GM12878 (cell line): ENCODE measurements at regions of chr17 and their contacts with region 1.

Region 1: GRCh38 chr17:7862692-7863437 is 5.1 kb downstream of the CYB5D1 start:
- DNase-seq: no peak
- ATAC-seq: no peak
- H3K4me3 ChIP-seq: no peak overlapping the region
- H3K27ac ChIP-seq: no peak overlapping the region
- H3K4me1 ChIP-seq: peaks cover 4% of the 10 kb centered on the region
- H3K27me3 ChIP-seq: no peaks in the 10 kb centered on the region
- CTCF ChIP-seq: peak; percentile 64 to 73 (median 67)
- EP300 ChIP-seq: no peak
- POLR2A ChIP-seq: no peak
- RAD21 ChIP-seq: peak; percentile 93

Region 2: DNA sequence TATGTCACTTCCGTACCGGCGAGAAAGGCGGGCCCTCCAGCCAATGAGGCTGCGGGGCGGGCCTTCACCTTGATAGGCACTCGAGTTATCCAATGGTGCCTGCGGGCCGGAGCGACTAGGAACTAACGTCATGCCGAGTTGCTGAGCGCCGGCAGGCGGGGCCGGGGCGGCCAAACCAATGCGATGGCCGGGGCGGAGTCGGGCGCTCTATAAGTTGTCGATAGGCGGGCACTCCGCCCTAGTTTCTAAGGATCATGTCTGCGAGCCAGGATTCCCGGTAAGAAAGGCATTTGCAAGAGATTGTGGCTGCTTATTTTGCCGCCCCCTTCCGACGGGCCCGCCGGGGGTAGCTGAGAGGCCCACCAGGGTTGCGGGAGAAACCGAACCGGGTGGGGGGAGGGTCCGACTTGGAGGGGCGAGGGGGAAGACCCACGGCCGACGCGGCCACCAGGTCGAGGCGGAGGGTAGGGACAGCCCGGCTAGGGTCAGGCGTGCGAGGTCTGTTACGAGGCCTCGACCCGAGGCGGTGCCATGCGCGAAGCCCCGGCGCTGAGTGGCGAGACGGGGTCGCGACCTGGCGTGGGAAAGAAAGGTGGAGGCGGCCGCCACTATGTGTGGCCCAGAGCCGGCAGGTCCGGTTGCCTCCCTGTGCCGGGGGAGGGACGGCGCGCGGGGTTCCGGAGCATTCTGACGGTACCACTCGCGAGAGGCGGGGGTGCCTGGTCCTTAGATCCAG is 290.1 kb before region 1 on chr17:
- CTCF ChIA-PET with region 1: no interaction called
- POLR2A ChIA-PET with region 1: no interaction called
- RAD21 ChIA-PET with region 1: no interaction called
- SMC1A ChIA-PET with region 1: no interaction called
- in situ Hi-C with region 1: no loop called
- intact Hi-C with region 1: no loop called
- DNase-seq: peak; percentile 98
- ATAC-seq: peak; percentile 0
- H3K4me3 ChIP-seq: peak overlapping the region; percentile 93
- H3K27ac ChIP-seq: peak overlapping the region; percentile 97
- H3K4me1 ChIP-seq: peaks cover 21% of the 10 kb centered on the region
- H3K27me3 ChIP-seq: no peaks in the 10 kb centered on the region
- CTCF ChIP-seq: no peak
- EP300 ChIP-seq: no peak
- POLR2A ChIP-seq: peak; percentile 85
- RAD21 ChIP-seq: no peak

Region 3: DNA sequence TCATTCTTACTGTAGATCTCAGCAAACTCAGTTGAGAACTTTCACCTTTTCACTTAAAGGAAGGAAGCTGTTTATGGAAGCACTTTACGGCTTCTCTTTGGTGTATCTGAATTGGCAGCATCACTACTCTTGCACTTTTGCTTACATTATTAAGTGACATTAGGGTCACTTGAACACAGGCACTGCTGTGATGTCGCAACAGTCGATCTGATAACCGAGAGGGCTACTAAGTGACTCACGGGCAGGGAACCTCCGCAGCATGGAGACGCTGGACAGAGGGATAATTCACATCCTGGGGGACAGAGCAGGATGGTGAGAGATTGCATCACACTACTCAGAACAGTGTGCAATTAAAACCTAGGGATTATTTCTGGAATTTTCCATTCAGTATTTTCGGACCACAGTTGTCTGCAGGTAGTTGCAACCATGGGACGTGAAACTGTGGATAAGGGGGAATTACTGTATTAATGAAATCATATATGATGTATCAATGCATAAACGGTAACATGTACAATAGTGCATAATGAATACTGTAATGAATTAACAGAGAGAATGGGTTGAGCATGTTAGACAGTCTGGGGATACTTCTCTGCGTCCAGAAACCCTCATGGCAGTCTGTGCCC is 88.7 kb before region 1 on chr17:
- CTCF ChIA-PET with region 1: no interaction called
- POLR2A ChIA-PET with region 1: no interaction called
- RAD21 ChIA-PET with region 1: no interaction called
- SMC1A ChIA-PET with region 1: no interaction called
- in situ Hi-C with region 1: no loop called
- intact Hi-C with region 1: no loop called
- DNase-seq: no peak
- ATAC-seq: no peak
- H3K4me3 ChIP-seq: no peak overlapping the region
- H3K27ac ChIP-seq: no peak overlapping the region
- H3K4me1 ChIP-seq: no peaks in the 10 kb centered on the region
- H3K27me3 ChIP-seq: peaks cover 3 to 5% of the 10 kb centered on the region in 2 experiments; a peak in 3 of 4 replicates
- CTCF ChIP-seq: no peak
- EP300 ChIP-seq: no peak
- POLR2A ChIP-seq: no peak
- RAD21 ChIP-seq: no peak

Region 4: GRCh38 chr17:7885367-7886226 is 22.7 kb after region 1 on chr17:
- CTCF ChIA-PET with region 1: interaction called, 75 read pairs
- POLR2A ChIA-PET with region 1: interaction called, 11 read pairs
- RAD21 ChIA-PET with region 1: interaction called, 8 read pairs
- SMC1A ChIA-PET with region 1: interaction called, 5 read pairs
- in situ Hi-C with region 1: no loop called
- intact Hi-C with region 1: no loop called
- DNase-seq: no peak
- ATAC-seq: peak; percentile 51
- H3K4me3 ChIP-seq: peak overlapping the region; percentile 88
- H3K27ac ChIP-seq: peak overlapping the region; percentile 91
- H3K4me1 ChIP-seq: peaks cover 14% of the 10 kb centered on the region
- H3K27me3 ChIP-seq: no peaks in the 10 kb centered on the region
- CTCF ChIP-seq: no peak
- EP300 ChIP-seq: no peak
- POLR2A ChIP-seq: peak; percentile 67
- RAD21 ChIP-seq: no peak

Region 5: DNA sequence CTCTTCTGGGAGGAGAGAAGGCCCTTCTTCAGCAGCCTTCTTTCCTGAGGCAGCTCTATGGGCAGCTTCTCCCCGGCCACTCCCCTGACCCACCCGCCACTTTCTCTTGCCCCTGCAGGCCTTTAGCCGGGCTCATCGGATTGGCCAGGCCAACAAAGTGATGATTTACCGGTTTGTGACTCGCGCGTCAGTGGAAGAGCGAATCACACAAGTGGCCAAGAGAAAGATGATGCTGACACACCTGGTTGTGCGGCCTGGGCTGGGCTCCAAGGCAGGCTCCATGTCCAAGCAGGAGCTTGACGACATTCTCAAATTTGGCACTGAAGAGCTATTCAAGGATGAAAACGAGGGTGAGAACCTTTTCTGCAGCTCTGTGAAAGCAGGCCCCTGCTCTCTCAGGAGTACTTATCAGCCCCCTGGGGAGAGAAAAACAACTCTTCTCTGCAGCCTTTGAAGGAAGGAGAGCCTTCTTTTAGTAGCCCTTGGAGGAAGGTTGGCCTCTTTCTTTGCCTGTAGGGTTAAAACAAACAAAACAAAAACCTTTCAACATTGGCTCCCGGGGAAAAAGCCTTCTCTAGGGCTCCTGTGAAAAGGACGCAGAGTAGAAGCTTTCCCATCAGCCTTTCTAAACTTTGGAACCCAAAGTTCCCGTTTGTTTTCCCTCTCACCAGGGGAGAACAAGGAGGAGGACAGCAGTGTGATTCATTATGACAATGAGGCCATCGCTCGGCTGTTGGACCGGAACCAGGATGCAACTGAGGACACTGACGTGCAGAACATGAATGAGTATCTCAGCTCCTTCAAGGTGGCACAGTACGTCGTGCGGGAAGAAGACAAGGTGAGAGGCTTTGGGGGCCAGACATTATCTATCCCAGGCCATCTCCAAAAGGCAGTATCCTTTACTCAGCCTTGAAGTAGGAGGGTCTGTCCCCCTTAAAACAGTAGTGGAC is 40.6 kb after region 1 on chr17:
- CTCF ChIA-PET with region 1: interaction called, 19 read pairs
- POLR2A ChIA-PET with region 1: no interaction called
- RAD21 ChIA-PET with region 1: no interaction called
- SMC1A ChIA-PET with region 1: interaction called, 12 read pairs
- in situ Hi-C with region 1: no loop called
- intact Hi-C with region 1: loop called (anchors 5 kb)
- DNase-seq: no peak
- ATAC-seq: no peak
- H3K4me3 ChIP-seq: no peak overlapping the region
- H3K27ac ChIP-seq: no peak overlapping the region
- H3K4me1 ChIP-seq: no peaks in the 10 kb centered on the region
- H3K27me3 ChIP-seq: no peaks in the 10 kb centered on the region
- CTCF ChIP-seq: no peak
- EP300 ChIP-seq: no peak
- POLR2A ChIP-seq: no peak
- RAD21 ChIP-seq: no peak

Region 6: DNA sequence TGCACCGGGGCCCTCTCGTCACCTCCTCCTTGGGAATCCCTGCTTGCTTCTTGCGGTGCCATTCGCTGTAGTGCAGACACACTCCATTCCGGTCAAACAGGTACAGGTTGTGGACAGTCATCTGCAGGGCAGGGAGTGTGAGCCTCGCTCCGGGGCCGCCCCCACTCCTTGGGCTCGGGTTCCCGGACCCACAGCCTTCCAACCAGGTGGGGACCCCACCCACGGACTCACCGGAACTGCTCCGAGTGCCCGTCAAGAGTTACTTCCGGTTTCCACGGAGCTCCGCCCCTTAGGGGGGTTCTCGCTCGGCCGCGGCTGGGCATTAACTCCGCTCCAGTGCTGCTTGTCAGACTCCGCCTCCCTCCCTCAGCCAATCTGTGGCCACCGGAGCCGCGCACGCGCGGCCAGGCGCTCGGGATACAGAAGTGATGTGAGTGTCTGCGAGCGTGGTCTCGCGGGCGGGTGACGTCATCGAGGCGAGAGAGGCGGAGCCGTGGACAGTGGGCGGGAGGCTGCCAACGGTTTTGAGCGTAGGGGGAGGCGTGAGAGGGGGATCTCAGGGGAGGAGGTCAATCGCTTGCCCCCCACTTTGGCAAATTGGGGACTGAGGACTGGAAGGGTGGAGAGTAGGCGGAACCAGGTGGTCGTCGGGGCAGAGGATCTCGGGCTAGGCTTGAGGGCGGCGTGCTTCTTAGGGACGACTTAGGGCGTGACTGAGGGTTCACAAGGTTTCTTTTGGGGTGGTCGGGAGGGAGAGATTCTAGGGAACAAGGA is 69.0 kb after region 1 on chr17 and contains the starts of genes CNTROB and TRAPPC1:
- CTCF ChIA-PET with region 1: interaction called, 22 read pairs
- POLR2A ChIA-PET with region 1: interaction called, 3 read pairs
- RAD21 ChIA-PET with region 1: interaction called, 10 read pairs
- SMC1A ChIA-PET with region 1: interaction called, 25 read pairs
- in situ Hi-C with region 1: no loop called
- intact Hi-C with region 1: no loop called
- DNase-seq: peak; percentile 98
- ATAC-seq: peak; percentile 92
- H3K4me3 ChIP-seq: peak within 1 kb of the TSS; percentile 100
- H3K27ac ChIP-seq: peak within 1 kb of the TSS; percentile 96
- H3K4me1 ChIP-seq: peaks cover 8% of the 10 kb centered on the region
- H3K27me3 ChIP-seq: no peaks in the 10 kb centered on the region
- CTCF ChIP-seq: no peak
- EP300 ChIP-seq: peak in 1 of 2 experiments; percentile 27; a peak in 1 of 4 replicates
- POLR2A ChIP-seq: peak; percentile 92
- RAD21 ChIP-seq: no peak
- polyA plus RNA-seq, gene CNTROB: 2.0 to 4.2 TPM
- polyA plus RNA-seq, gene TRAPPC1: 95.5 to 113 TPM

Region 7: GRCh38 chr17:8041249-8041928 is 178.5 kb after region 1 on chr17:
- CTCF ChIA-PET with region 1: interaction called, 14 read pairs
- POLR2A ChIA-PET with region 1: interaction called, 3 read pairs
- RAD21 ChIA-PET with region 1: interaction called, 3 read pairs
- SMC1A ChIA-PET with region 1: interaction called, 9 read pairs
- in situ Hi-C with region 1: no loop called
- intact Hi-C with region 1: loop called (anchors 5 kb)
- DNase-seq: no peak
- ATAC-seq: peak; percentile 80
- H3K4me3 ChIP-seq: no peak overlapping the region
- H3K27ac ChIP-seq: no peak overlapping the region
- H3K4me1 ChIP-seq: no peaks in the 10 kb centered on the region
- H3K27me3 ChIP-seq: peaks cover 0 to 3% of the 10 kb centered on the region in 2 experiments; a peak in 2 of 4 replicates
- CTCF ChIP-seq: peak; percentile 54 to 79 (median 67); a peak in 5 of 6 replicates
- EP300 ChIP-seq: no peak
- POLR2A ChIP-seq: no peak
- RAD21 ChIP-seq: peak; percentile 78